CD4-positive, alpha-beta memory T cell (primary cell): ENCODE measurements at regions of chr2 and their contacts with region 1.

Region 1: GRCh38 chr2:16608661-16609643 is 56.7 kb downstream of the CYRIA start:
- DNase-seq: peak; percentile 75 to 80 (median 78)
- H3K4me3 ChIP-seq: peak overlapping the region; percentile 69 to 73
- H3K4me3 Mint-ChIP-seq: peak overlapping the region; percentile 87 to 97 (median 90)
- H3K27ac ChIP-seq: no peak overlapping the region
- H3K27ac Mint-ChIP-seq: peak overlapping the region; percentile 20 to 80 (median 72)
- H3K4me1 ChIP-seq: no peaks in the 10 kb centered on the region
- H3K4me1 Mint-ChIP-seq: peaks cover 0 to 12% (median under 1%) of the 10 kb centered on the region in 4 donors
- H3K27me3 ChIP-seq: no peaks in the 10 kb centered on the region
- H3K27me3 Mint-ChIP-seq: peaks cover 5 to 6% of the 10 kb centered on the region in 2 donors

Region 2: DNA sequence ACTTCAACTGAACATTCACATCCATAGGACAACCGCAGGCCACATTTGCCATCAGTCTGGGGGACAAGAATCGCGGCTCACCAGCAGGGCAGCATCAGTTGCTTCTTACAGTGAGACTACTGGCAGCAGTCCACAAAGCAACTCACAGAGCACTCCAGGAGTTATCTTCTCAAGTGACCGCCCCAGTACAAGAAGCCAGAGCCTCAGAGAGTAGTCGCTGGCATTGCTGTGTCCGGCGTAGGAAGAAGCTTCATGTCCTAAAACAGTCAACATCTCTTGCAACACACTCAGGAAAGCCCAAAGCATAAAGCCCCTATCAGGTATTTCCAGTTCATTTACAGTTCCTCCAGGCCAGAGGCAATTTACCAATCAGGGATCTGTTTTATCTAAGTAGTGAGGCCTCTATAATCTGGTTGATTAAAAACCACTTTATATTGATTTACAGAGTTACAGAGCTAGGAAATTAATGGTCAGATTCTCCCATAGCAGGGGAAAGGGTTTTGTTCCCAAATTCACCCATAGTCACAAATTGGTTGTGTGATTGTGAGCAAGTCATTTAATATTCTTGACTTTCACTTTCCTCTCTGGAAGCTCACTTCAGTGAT is 1225.1 kb before region 1 on chr2:
- CTCF ChIA-PET with region 1: no interaction called
- POLR2A ChIA-PET with region 1: no interaction called
- intact Hi-C with region 1: no loop called
- DNase-seq: no peak
- H3K4me3 ChIP-seq: no peak overlapping the region
- H3K4me3 Mint-ChIP-seq: no peak overlapping the region
- H3K27ac ChIP-seq: no peak overlapping the region
- H3K27ac Mint-ChIP-seq: peak overlapping the region in 2 of 7 donors; percentile 24 to 60
- H3K4me1 ChIP-seq: no peaks in the 10 kb centered on the region
- H3K4me1 Mint-ChIP-seq: peaks cover 0 to 1% (median 0%) of the 10 kb centered on the region in 4 donors
- H3K27me3 ChIP-seq: no peaks in the 10 kb centered on the region
- H3K27me3 Mint-ChIP-seq: no peaks in the 10 kb centered on the region

Region 3: GRCh38 chr2:15636972-15637785 is 971.8 kb before region 1 on chr2:
- CTCF ChIA-PET with region 1: interaction called, 29 read pairs
- POLR2A ChIA-PET with region 1: no interaction called
- intact Hi-C with region 1: no loop called
- DNase-seq: peak; percentile 31 to 48 (median 40)
- H3K4me3 ChIP-seq: no peak overlapping the region
- H3K4me3 Mint-ChIP-seq: no peak overlapping the region
- H3K27ac ChIP-seq: no peak overlapping the region
- H3K27ac Mint-ChIP-seq: peak overlapping the region in 4 of 7 donors; percentile 11 to 80 (median 42)
- H3K4me1 ChIP-seq: no peaks in the 10 kb centered on the region
- H3K4me1 Mint-ChIP-seq: peaks cover 0 to 5% (median 0%) of the 10 kb centered on the region in 4 donors
- H3K27me3 ChIP-seq: no peaks in the 10 kb centered on the region
- H3K27me3 Mint-ChIP-seq: no peaks in the 10 kb centered on the region

Region 4: DNA sequence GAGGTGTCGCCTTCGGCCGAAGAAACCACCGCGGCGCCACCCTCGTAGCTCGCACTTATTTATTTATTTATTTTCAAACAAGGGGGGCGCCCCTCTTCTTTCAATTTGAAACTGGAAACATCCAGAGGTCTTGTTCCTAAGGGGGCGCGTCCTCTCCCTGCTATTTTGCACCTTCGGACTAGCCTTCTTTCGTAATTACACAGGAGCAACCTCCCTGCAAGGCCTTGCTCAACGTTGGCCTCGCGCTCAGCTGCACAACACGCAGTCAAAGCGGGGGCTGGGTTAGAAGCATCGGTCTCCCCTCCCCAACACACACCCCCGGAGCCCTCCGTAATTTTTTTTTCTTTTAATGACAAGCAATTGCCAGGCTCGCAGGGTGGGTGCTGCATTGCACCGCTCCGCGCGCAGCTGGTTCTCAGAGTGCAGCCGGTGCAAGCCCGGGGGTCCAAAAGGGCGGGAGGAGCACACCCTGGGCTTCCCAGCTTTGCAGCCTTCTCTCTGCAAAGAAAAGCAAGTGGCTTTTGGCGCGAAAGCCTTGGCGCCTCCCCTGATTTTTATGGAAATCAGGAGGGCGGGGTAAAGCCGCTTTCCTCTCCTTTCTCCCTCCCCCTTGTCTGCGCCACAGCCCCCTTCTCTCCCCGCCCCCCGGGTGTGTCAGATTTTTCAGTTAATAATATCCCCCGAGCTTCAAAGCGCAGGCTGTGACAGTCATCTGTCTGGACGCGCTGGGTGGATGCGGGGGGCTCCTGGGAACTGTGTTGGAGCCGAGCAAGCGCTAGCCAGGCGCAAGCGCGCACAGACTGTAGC is 668.9 kb before region 1 on chr2 and contains the start of gene MYCN:
- CTCF ChIA-PET with region 1: interaction called, 26 read pairs
- POLR2A ChIA-PET with region 1: no interaction called
- intact Hi-C with region 1: loop called (anchors 1 kb)
- DNase-seq: peak in 4 of 5 donors; percentile 14 to 20 (median 17)
- H3K4me3 ChIP-seq: peak within 1 kb of the TSS in 1 of 2 donors; percentile 19
- H3K4me3 Mint-ChIP-seq: peak within 1 kb of the TSS; percentile 58 to 83 (median 73)
- H3K27ac ChIP-seq: no peak within 1 kb of the TSS
- H3K27ac Mint-ChIP-seq: no peak within 1 kb of the TSS
- H3K4me1 ChIP-seq: peaks cover 28% of the 10 kb centered on the region
- H3K4me1 Mint-ChIP-seq: peaks cover 7 to 36% (median 25%) of the 10 kb centered on the region in 4 donors
- H3K27me3 ChIP-seq: peaks cover 4% of the 10 kb centered on the region
- H3K27me3 Mint-ChIP-seq: peaks cover 40 to 46% of the 10 kb centered on the region in 2 donors
- total RNA-seq, gene MYCN: 0.15 TPM in 1 of 2 experiments, not detected in the other

Region 5: GRCh38 chr2:16462958-16463357 is 146.0 kb before region 1 on chr2:
- CTCF ChIA-PET with region 1: no interaction called
- POLR2A ChIA-PET with region 1: no interaction called
- intact Hi-C with region 1: no loop called
- DNase-seq: no peak
- H3K4me3 ChIP-seq: no peak overlapping the region
- H3K4me3 Mint-ChIP-seq: no peak overlapping the region
- H3K27ac ChIP-seq: no peak overlapping the region
- H3K27ac Mint-ChIP-seq: no peak overlapping the region
- H3K4me1 ChIP-seq: no peaks in the 10 kb centered on the region
- H3K4me1 Mint-ChIP-seq: no peaks in the 10 kb centered on the region
- H3K27me3 ChIP-seq: no peaks in the 10 kb centered on the region
- H3K27me3 Mint-ChIP-seq: peaks cover 1 to 3% of the 10 kb centered on the region in 2 donors

Region 6: GRCh38 chr2:16623031-16623430 is 14.1 kb after region 1 on chr2:
- CTCF ChIA-PET with region 1: interaction called, 26 read pairs
- POLR2A ChIA-PET with region 1: no interaction called
- intact Hi-C with region 1: no loop called
- DNase-seq: no peak
- H3K4me3 ChIP-seq: no peak overlapping the region
- H3K4me3 Mint-ChIP-seq: no peak overlapping the region
- H3K27ac ChIP-seq: no peak overlapping the region
- H3K27ac Mint-ChIP-seq: no peak overlapping the region
- H3K4me1 ChIP-seq: no peaks in the 10 kb centered on the region
- H3K4me1 Mint-ChIP-seq: peaks cover 11 to 39% (median 25%) of the 10 kb centered on the region in 4 donors
- H3K27me3 ChIP-seq: no peaks in the 10 kb centered on the region
- H3K27me3 Mint-ChIP-seq: peaks cover 0 to 1% of the 10 kb centered on the region in 2 donors

Region 7: GRCh38 chr2:16756831-16757644 is 148.1 kb after region 1 on chr2:
- CTCF ChIA-PET with region 1: interaction called, 3 read pairs
- POLR2A ChIA-PET with region 1: no interaction called
- intact Hi-C with region 1: loop called (anchors 1 kb)
- DNase-seq: peak in 4 of 5 donors; percentile 24 to 36 (median 28)
- H3K4me3 ChIP-seq: no peak overlapping the region
- H3K4me3 Mint-ChIP-seq: no peak overlapping the region
- H3K27ac ChIP-seq: no peak overlapping the region
- H3K27ac Mint-ChIP-seq: no peak overlapping the region
- H3K4me1 ChIP-seq: no peaks in the 10 kb centered on the region
- H3K4me1 Mint-ChIP-seq: no peaks in the 10 kb centered on the region
- H3K27me3 ChIP-seq: no peaks in the 10 kb centered on the region
- H3K27me3 Mint-ChIP-seq: peaks cover 0 to 4% of the 10 kb centered on the region in 2 donors